Calu3 (cell line): ENCODE measurements at regions of chr5 and their contacts with region 1.

Region 1: DNA sequence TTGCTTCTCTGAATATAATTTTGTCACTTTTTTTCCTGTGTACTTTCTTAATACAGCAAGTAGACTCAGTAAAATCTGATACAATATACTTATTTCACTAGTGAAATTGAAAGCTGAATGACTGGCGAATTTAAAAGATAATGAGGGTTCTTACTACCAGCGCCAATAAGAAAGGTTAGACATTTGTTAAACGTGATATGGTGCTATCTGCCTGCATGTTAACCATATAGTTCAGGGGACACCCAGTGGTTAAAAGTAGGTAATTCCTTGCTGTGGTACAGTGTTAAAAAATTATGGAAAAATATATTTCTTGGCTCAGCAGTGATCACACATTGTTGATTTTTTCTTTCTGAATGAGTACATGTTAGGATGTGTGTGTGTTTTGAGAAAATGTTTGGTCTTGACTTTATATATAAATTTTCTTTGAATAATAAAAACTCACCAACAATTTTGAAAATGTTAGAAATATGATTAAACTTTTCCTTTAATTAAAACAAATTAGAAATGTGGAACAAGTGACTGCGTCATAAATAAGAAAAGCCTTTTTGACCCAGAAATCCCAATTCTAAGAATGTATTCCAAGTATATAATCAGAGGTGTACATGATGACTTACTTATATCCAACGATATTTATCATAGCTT is 25.8 kb downstream of the CAST start:
- DNase-seq: no peak
- H3K4me3 Mint-ChIP-seq: no peak overlapping the region
- H3K27ac Mint-ChIP-seq: no peak overlapping the region
- H3K4me1 Mint-ChIP-seq: peaks cover 30% of the 10 kb centered on the region
- H3K27me3 Mint-ChIP-seq: no peaks in the 10 kb centered on the region
- CTCF ChIP-seq: peak; percentile 65

Region 2: GRCh38 chr5:96729156-96729555 is 41.2 kb after region 1 on chr5:
- CTCF ChIA-PET with region 1: no interaction called
- intact Hi-C with region 1: loop called (anchors 5 kb)
- DNase-seq: no peak
- H3K4me3 Mint-ChIP-seq: no peak overlapping the region
- H3K27ac Mint-ChIP-seq: no peak overlapping the region
- H3K4me1 Mint-ChIP-seq: peaks cover 17% of the 10 kb centered on the region
- H3K27me3 Mint-ChIP-seq: no peaks in the 10 kb centered on the region
- CTCF ChIP-seq: no peak

Region 3: GRCh38 chr5:96752341-96753016 is 64.5 kb after region 1 on chr5:
- CTCF ChIA-PET with region 1: interaction called, 17 read pairs
- intact Hi-C with region 1: no loop called
- DNase-seq: peak; percentile 65
- H3K4me3 Mint-ChIP-seq: no peak overlapping the region
- H3K27ac Mint-ChIP-seq: no peak overlapping the region
- H3K4me1 Mint-ChIP-seq: peaks cover 18% of the 10 kb centered on the region
- H3K27me3 Mint-ChIP-seq: no peaks in the 10 kb centered on the region
- CTCF ChIP-seq: peak; percentile 32

Region 4: DNA sequence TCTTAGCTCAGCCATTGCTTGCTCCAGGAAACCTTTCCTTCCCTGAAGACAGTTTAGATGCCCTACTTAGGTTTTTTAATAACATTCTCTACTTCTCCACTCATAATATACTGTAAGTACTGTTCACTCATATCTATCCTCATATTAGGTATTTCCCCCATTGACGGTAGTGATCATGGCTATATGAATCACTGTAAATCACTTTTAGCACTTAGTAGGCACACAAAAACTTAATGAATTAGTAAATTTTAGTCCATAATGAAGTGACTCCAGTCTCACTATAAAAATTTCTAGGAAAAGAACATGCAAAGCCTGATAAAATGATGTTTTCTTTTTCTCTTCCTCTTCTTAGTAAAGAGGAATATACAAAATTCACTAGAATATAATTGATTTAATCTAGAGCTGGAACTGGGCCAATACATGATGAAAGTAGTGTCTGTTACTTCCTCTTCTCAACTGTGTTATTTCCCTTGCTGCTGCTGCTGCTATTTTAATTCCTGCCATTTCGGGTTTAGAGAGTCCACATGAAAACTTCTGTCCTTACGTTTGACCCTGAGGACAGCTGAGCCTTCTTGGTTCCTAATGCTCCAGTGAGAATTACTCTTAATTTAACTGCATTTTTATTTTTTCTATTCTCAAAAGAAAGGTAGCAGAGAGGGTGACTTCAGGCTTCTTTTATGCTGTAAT is 321.4 kb after region 1 on chr5:
- CTCF ChIA-PET with region 1: no interaction called
- intact Hi-C with region 1: no loop called
- DNase-seq: no peak
- H3K4me3 Mint-ChIP-seq: no peak overlapping the region
- H3K27ac Mint-ChIP-seq: no peak overlapping the region
- H3K4me1 Mint-ChIP-seq: peaks cover 7% of the 10 kb centered on the region
- H3K27me3 Mint-ChIP-seq: no peaks in the 10 kb centered on the region
- CTCF ChIP-seq: no peak

Region 5: DNA sequence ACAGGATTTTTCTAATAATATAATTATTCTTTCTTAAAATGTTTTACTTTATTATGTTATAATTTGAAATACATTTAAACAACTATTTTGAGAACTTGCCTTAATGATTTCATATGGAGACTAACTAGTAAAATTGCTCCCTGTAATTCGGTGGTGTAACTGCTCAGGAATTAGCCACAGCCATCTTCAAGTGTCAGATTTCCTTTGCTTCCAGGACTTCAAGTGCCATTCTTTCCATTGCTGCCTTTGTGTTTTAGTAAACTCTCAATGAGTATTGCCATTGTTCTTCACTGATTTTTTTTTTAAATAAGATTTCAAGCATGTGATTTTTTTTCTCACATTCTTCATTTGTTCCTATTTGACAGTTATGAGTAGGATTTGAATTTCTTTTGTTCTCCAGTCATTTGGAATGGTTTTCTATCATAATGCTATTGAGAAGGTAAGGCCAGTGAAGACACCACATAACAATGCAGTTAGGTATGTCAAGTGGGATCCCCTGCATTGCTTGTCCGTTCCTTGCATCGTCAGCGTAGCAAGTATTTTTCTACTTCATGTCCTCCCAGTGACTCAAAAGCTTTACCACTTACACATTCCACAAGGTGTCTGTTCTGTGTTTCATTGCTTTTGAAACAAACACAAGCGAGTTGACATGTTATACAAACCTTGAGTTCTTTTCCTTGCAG is 331.6 kb after region 1 on chr5:
- CTCF ChIA-PET with region 1: no interaction called
- intact Hi-C with region 1: no loop called
- DNase-seq: no peak
- H3K4me3 Mint-ChIP-seq: no peak overlapping the region
- H3K27ac Mint-ChIP-seq: no peak overlapping the region
- H3K4me1 Mint-ChIP-seq: no peaks in the 10 kb centered on the region
- H3K27me3 Mint-ChIP-seq: no peaks in the 10 kb centered on the region
- CTCF ChIP-seq: no peak